Cardiac septum (tissue), 1 donor: ENCODE measurements at regions of chr4 and their contacts with region 1.

Region 1: DNA sequence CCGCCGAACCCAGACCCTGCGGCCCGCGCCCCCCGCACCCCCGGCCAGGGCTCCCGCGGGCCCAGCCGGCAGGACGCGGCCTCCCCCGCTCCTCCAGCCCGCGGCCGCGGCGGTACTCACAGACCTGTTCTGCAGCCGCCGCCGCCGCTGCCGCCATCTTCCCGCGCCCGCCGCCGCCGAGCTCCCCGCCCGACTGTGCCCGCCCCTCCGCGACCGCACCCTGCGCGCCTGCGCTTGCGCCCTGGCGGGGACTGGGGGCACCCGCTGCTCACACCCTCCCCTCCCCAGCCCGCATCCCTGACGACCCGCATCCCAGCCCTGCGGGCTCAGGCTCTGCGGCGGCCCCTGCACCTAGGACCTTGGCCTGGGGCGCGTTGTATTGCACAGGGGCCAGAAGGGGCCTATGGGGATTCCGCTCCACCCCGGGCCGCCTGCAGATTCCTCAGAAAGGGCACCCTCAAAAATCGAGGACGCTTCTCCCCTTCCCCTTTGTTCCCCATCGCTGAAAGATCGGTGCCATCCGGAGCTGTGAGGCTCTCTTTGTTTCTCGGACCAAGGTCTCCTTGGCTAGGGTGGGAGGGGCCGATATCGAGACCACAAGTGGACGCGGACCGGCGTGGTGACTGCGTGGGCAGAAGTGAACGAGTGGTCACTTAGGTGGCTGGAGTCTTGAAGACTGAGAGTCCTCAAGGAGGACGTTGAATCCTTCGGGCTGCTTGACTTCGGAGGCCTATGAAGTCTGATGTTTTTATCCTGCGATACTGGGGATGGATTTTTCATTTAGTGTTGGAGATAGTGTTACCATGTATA is at the start of gene SGCB:
- DNase-seq: peak; percentile 87
- total RNA-seq, gene SGCB: 92.1 TPM

Region 2: DNA sequence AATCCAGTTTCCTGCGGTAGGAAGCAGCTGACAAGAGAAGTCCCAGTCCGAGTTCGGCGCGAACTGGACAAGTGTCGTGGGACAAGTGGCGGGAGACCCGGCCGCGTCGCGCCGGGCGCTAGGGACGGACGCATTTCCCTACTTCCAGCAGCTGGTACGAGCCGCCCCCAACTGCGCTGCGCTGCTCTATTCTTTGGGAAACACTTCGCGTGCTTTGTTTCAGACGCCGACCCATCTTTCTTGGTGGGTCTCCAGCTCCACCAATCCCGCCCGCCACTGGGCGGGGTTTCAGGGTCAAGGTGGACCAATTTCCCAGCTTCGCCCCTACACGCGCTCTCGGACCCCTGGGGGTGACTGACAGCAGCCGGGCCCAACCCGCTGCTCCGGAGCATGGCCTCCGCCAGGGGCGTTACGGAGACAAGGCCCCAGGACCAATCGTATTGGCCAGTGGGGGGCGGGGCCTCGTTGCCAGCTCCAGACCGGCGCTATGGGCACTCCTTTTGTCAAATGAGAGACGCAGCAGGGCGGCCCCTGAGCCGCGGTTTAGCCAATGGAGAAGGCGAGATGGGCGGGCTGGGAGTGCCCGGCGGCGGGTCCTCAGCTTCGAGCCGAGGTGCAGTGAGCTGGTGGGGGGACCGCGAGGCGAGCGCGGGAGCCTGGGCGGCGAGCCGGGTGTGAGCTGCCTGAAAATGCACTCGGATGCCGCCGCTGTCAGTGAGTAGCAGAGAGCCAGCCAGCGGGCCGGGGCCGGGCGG is 195.6 kb before region 1 on chr4 and contains the start of gene DCUN1D4:
- intact Hi-C with region 1: loop called (anchors 5 kb)
- DNase-seq: peak; percentile 100
- total RNA-seq, gene DCUN1D4: 46.0 TPM

Region 3: DNA sequence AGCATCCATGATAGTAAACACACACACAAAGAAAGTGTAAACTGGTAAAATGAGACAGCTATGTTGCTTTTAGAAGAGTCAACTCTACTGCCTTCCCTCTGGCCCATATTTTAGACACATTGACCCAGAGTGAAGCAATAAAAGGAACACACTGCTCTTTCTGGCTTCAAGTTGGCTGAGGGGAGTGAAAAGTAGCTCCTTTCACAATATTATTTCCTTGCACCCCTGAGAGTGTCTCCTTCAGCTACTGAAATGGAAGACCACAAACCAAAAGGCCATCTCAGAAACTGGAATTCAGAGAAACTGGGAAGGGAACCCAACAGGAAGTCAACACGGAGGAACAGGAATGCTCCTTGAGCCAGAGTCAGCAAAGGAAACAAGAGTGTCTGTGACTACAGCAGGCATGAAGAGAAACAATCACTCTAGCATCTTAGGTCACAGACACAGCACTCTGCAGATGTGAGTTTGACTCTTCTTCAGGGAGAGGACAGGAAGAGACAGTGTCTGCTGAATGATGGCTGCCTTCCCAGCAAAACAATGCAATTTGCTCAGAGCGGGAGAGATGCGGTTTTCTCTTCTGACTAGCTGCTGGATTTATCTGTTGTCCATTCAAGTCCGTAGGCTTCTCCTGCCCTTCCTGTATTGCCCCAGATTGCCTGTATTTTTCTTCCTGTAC is 119.5 kb after region 1 on chr4:
- intact Hi-C with region 1: no loop called
- DNase-seq: no peak